ENCODE measurements at regions of chr18 and their contacts with region 1.

Region 1: GRCh38 chr18:58768293-58768974 is 96.2 kb upstream of the ZNF532 start:
- DNase-seq: peak; percentile 84
- H3K4me3 ChIP-seq: peak overlapping the region in 1 of 3 experiments; percentile 28
- H3K27ac ChIP-seq: no peak overlapping the region
- H3K4me1 ChIP-seq: peaks cover 20% of the 10 kb centered on the region
- H3K27me3 ChIP-seq: no peaks in the 10 kb centered on the region
- CTCF ChIP-seq: peak; percentile 52 to 83

Region 2: GRCh38 chr18:58338961-58339592 is 429.4 kb before region 1 on chr18:
- CTCF ChIA-PET with region 1: no interaction called
- dilution Hi-C with region 1: no loop called
- in situ Hi-C with region 1: no loop called
- intact Hi-C with region 1: loop called (anchors 10 kb)
- DNase-seq: no peak
- H3K4me3 ChIP-seq: no peak overlapping the region
- H3K27ac ChIP-seq: no peak overlapping the region
- H3K4me1 ChIP-seq: peaks cover 7% of the 10 kb centered on the region
- H3K27me3 ChIP-seq: no peaks in the 10 kb centered on the region
- CTCF ChIP-seq: no peak

Region 3: GRCh38 chr18:58402247-58402646 is 366.2 kb before region 1 on chr18:
- CTCF ChIA-PET with region 1: interaction called, 7 read pairs
- dilution Hi-C with region 1: no loop called
- in situ Hi-C with region 1: loop called in 1 of 2 experiments (anchors 10 kb)
- intact Hi-C with region 1: loop called (anchors 1 kb)
- DNase-seq: peak; percentile 65
- H3K4me3 ChIP-seq: no peak overlapping the region
- H3K27ac ChIP-seq: no peak overlapping the region
- H3K4me1 ChIP-seq: peaks cover 8% of the 10 kb centered on the region
- H3K27me3 ChIP-seq: no peaks in the 10 kb centered on the region
- CTCF ChIP-seq: no peak

Region 4: GRCh38 chr18:58615140-58616132 is 153.0 kb before region 1 on chr18:
- CTCF ChIA-PET with region 1: interaction called, 3 read pairs
- dilution Hi-C with region 1: no loop called
- in situ Hi-C with region 1: no loop called
- intact Hi-C with region 1: loop called (anchors 10 kb)
- DNase-seq: peak; percentile 46
- H3K4me3 ChIP-seq: no peak overlapping the region
- H3K27ac ChIP-seq: no peak overlapping the region
- H3K4me1 ChIP-seq: peaks cover 18% of the 10 kb centered on the region
- H3K27me3 ChIP-seq: no peaks in the 10 kb centered on the region
- CTCF ChIP-seq: no peak

Region 5: GRCh38 chr18:59056706-59057492 is 288.5 kb after region 1 on chr18:
- CTCF ChIA-PET with region 1: no interaction called
- dilution Hi-C with region 1: no loop called
- in situ Hi-C with region 1: no loop called
- intact Hi-C with region 1: loop called (anchors 1 kb)
- DNase-seq: peak; percentile 58
- H3K4me3 ChIP-seq: no peak overlapping the region
- H3K27ac ChIP-seq: no peak overlapping the region
- H3K4me1 ChIP-seq: no peaks in the 10 kb centered on the region
- H3K27me3 ChIP-seq: no peaks in the 10 kb centered on the region
- CTCF ChIP-seq: peak; percentile 92 to 96

Region 6: DNA sequence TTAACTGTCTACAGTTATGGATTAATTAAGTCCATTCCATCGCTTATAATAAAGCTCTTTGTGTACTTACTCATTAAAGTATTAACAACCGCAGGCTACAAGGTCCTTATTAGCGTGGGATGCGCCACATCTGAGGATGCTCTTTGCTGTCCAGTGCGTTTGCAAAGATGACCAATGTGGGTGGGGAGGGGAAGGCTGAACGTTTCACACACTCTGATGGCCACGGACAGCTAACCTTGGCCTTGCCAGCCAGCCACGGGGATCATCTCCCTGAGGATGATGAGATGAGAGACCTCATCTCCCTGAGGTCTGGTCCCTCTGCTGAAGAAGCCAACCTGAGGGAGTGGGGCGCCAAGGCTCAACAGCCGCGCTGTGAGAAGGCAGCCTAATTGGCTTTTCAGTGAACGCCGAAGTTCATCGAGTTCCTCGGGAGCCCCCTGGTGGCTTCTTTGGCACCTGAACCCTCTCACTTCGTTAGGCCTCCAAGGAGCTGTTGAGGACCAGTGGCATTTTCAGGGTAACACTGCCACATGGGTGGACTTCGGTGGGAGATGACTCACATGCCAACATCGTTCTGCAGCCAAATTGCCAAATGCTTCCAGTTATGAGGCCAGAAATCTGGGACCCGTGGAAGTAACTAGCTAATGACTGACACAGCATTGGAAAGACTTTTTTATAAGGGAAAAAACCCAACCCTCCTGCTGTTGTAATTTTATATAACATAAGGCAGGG is 301.9 kb after region 1 on chr18:
- CTCF ChIA-PET with region 1: interaction called, 3 read pairs
- dilution Hi-C with region 1: no loop called
- in situ Hi-C with region 1: no loop called
- intact Hi-C with region 1: loop called (anchors 1 kb)
- DNase-seq: peak; percentile 67
- H3K4me3 ChIP-seq: no peak overlapping the region
- H3K27ac ChIP-seq: no peak overlapping the region
- H3K4me1 ChIP-seq: peaks cover 3% of the 10 kb centered on the region
- H3K27me3 ChIP-seq: no peaks in the 10 kb centered on the region
- CTCF ChIP-seq: peak; percentile 86 to 88

Measured in mammary epithelial cell (primary cell).